HEK293T (cell line): ENCODE measurements at regions of chr10 and their contacts with region 1.

Region 1: DNA sequence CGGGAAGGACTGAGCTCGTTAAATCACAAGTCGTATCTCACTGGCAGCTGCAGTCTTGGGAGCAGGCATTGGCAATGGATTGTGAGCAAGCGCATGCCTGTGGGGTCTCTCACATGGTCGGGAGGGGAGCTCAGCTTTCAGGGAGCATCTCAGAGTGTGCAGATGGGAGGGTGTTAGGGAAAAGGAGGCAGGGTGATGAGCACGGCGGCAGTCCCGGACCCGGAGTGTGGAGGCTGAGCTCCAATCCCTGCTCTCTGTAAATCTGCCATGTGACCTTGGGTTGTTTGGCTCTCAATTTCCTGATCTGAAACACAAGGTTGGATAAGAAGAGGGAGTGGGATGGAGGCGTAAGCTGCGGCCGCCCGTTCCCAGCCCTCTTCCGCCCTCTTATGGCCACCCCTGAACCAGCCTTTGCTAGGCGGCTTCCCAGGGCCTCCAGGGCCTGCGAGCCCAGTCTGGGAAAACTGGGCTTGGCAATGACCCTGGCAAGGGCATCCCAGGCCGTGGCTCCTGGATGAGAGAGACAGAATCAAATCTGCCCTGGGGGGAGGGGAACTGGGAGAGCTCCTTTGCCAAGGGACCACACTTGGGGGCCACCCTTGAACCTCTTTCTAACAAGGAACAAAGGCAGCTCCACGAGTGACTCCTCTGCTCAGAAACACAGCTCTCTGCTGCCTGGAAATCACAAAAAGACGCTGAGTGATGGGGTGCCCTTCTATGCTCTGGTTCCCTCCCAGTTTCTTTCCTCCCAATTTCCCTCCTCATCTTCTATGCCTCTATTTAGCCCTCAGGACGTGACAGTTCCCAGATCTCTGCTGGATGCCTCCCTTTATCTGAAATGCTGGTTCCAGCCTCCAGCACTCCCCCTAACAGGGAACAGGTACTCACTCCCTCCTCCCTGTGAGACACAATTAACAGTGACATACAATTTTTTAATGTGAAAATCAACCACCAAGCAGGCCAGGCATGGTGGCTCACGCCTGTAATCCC is 41.7 kb upstream of the LOXL4 start:
- DNase-seq: peak; percentile 94

Region 2: GRCh38 chr10:98170249-98171117 is 139.2 kb before region 1 on chr10:
- CTCF ChIA-PET with region 1: interaction called, 49 read pairs
- POLR2A ChIA-PET with region 1: interaction called, 3 read pairs
- DNase-seq: peak; percentile 66

Region 3: GRCh38 chr10:98195120-98195519 is 114.5 kb before region 1 on chr10:
- CTCF ChIA-PET with region 1: no interaction called
- POLR2A ChIA-PET with region 1: no interaction called
- DNase-seq: no peak

Region 4: DNA sequence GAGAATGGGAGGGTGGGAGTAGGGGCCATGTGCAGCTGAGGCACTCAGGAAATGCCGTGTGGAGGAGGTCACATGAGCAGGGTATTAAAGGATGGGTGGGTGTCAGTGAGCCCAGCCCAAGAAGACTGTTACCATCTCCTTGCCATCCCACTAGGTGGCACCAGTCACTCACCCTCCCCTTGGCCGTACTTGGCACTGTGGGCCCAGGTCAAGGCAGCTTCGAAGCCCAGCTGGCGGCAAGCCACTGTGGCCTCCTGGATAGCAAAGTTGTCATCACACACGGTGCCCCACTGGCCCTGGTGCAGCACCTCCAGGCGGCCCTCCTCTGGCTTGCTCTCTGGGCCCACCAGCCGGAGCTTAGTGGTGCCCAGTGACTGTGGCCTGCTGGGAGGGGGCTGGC is 47.1 kb before region 1 on chr10:
- CTCF ChIA-PET with region 1: interaction called, 18 read pairs
- POLR2A ChIA-PET with region 1: no interaction called
- DNase-seq: no peak

Region 5: GRCh38 chr10:98414932-98415730 is 105.5 kb after region 1 on chr10 and contains the start of gene PYROXD2:
- CTCF ChIA-PET with region 1: no interaction called
- POLR2A ChIA-PET with region 1: no interaction called
- DNase-seq: peak; percentile 85